ENCODE measurements at regions of chr1 and their contacts with region 1.

Region 1: DNA sequence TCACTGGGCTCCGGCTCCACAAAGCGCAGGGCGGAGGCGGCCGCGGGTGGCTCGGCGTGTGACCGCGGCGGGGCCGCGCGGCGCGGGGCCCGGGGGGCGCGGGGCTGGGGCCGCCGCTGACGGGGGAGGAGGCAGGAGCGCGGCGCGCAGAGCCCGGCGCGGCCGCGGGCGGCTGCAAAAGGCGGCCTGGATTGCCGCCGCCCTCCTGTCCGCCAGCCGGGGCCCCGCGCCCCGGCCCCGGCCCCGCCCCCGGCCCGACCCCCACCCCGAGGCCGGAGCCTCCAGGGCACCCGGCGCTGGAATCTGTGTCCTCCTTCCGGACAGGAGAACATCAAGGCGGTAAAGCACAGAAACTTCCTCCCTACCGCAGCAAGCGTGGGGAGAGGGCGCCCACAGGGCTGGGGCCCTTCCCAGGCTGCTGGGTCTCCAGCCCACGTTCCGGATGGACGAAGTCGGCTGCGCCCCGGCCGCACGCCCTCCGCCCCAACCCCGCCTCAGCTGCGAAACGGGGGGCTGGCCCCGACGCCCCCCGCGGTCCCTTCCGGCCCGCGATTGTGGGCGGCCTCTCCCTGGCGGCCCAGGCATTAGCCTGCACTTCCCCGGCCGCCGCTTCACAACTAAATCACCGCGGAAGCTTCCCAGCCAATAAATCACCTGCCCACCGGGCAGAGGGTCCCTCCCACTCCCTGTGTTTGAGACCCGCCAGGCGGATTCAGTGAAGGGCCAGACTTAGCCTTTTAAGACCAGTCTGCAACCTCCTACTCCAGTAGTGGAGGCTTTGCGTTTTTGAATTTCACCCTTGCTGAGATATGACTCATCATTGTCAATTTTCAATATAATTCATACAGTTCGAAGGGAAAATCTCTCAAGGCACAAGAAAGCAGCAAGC is 106.0 kb downstream of the SLC45A1 start:
- DNase-seq: peak; percentile 89
- H3K4me3 ChIP-seq: peak overlapping the region; percentile 60 to 89 (median 72)
- H3K27ac ChIP-seq: peak overlapping the region; percentile 90 to 99 (median 98)
- H3K4me1 ChIP-seq: peaks cover 67 to 91% (median 84%) of the 10 kb centered on the region in 6 donors
- H3K27me3 ChIP-seq: no peaks in the 10 kb centered on the region
- CTCF ChIP-seq: peak in 6 of 11 experiments; percentile 19 to 42 (median 32)
- POLR2A ChIP-seq: peak in 1 of 3 donors; percentile 59

Region 2: DNA sequence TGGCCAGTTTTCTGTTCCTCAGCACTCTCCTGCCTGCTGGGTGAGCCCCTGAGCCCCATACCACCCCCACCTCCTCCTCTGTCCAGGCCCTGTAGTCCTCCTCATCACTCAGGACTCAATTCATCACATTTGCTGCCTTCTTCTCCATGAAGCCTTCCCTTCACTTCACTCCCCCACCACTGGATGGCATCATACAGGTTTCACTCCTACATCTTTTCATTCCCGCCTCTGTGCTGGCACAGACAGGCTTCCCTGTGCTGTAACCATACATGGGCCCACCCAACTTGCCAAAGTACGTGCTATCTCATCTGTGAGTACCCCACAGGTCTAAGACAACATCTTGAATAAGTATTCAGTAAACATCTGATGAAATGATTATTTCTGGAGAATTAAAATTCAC is 49.1 kb before region 1 on chr1:
- intact Hi-C with region 1: loop called (anchors 10 kb)
- DNase-seq: no peak
- H3K4me3 ChIP-seq: no peak overlapping the region
- H3K27ac ChIP-seq: peak overlapping the region in 7 of 8 donors; percentile 47 to 84 (median 74)
- H3K4me1 ChIP-seq: peaks cover 39 to 99% (median 73%) of the 10 kb centered on the region in 6 donors
- H3K27me3 ChIP-seq: no peaks in the 10 kb centered on the region
- CTCF ChIP-seq: peak in 7 of 11 experiments; percentile 31 to 43 (median 37)
- POLR2A ChIP-seq: no peak

Region 3: GRCh38 chr1:8525558-8526275 is 101.8 kb after region 1 on chr1:
- intact Hi-C with region 1: loop called (anchors 10 kb)
- DNase-seq: peak; percentile 84
- H3K4me3 ChIP-seq: peak overlapping the region; percentile 20 to 65 (median 41)
- H3K27ac ChIP-seq: peak overlapping the region; percentile 67 to 91 (median 86)
- H3K4me1 ChIP-seq: peaks cover 12 to 81% (median 50%) of the 10 kb centered on the region in 6 donors
- H3K27me3 ChIP-seq: no peaks in the 10 kb centered on the region
- CTCF ChIP-seq: no peak
- POLR2A ChIP-seq: no peak

Measured in spleen (tissue), 13 donors.